Activated T-helper 2 cell treated with anti-CD3 and anti-CD28 coated beads, Interferon-gamma antibody, Interleukin-2, Interleukin-4, amounts not matched to agents 10 μg/mL and 5 μg/mL and 100 μg/mL, durations not matched to agents 14 hours and 24 hours and 36 hours (primary cell): ENCODE measurements at regions of chr20 and their contacts with region 1.

Region 1: GRCh38 chr20:20712474-20713243 is at the start of gene RALGAPA2:
- DNase-seq: peak; percentile 92
- H3K4me3 Mint-ChIP-seq: peak within 1 kb of the TSS; percentile 87
- H3K27ac Mint-ChIP-seq: peak within 1 kb of the TSS; percentile 86
- H3K4me1 Mint-ChIP-seq: peaks cover 27% of the 10 kb centered on the region
- H3K27me3 Mint-ChIP-seq: no peaks in the 10 kb centered on the region
- total RNA-seq, gene RALGAPA2: 22.1 and 25.0 TPM in 2 replicates

Region 2: GRCh38 chr20:20677186-20677585 is 35.5 kb before region 1 on chr20:
- intact Hi-C with region 1: loop called (anchors 5 kb)
- DNase-seq: no peak
- H3K4me3 Mint-ChIP-seq: no peak overlapping the region
- H3K27ac Mint-ChIP-seq: no peak overlapping the region
- H3K4me1 Mint-ChIP-seq: peaks cover 9% of the 10 kb centered on the region
- H3K27me3 Mint-ChIP-seq: no peaks in the 10 kb centered on the region

Region 3: DNA sequence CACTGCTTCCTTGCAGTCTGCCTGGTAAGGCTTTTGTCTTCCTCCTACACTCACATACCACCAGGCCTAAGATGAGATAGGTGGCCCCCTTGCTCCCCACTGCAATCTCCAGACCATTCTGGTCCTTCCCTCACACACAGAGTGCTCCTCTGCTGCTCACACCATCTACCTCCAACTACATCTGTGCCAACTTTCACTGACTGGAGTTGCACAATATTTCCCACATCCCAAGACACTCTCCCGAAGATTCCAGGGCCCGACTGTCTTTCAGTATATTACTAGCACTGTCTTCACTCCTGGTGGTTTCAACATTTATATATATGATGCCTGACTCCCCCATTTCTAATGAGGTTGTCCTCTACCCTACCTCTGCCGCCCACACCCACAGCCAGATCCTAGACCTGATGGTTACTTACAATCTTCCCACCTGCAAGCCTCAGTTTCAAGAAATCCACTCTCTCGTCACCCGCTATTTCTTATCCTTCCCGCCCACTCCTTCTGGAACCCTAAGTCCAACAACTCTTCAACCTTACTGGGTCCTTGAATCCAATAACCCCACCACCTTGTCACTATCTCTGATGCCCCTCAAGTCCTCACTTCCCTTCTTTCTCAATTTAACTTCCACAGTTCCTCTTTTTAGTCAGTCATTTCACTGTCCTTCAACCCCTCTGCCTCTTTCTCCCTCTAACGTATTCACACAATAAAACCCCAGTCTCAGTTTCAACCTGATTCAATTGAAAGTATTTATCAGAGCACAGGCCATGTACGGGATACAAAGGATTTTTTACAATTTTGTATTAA is 21.8 kb before region 1 on chr20:
- intact Hi-C with region 1: no loop called
- DNase-seq: no peak
- H3K4me3 Mint-ChIP-seq: no peak overlapping the region
- H3K27ac Mint-ChIP-seq: no peak overlapping the region
- H3K4me1 Mint-ChIP-seq: peaks cover 3% of the 10 kb centered on the region
- H3K27me3 Mint-ChIP-seq: no peaks in the 10 kb centered on the region

Region 4: DNA sequence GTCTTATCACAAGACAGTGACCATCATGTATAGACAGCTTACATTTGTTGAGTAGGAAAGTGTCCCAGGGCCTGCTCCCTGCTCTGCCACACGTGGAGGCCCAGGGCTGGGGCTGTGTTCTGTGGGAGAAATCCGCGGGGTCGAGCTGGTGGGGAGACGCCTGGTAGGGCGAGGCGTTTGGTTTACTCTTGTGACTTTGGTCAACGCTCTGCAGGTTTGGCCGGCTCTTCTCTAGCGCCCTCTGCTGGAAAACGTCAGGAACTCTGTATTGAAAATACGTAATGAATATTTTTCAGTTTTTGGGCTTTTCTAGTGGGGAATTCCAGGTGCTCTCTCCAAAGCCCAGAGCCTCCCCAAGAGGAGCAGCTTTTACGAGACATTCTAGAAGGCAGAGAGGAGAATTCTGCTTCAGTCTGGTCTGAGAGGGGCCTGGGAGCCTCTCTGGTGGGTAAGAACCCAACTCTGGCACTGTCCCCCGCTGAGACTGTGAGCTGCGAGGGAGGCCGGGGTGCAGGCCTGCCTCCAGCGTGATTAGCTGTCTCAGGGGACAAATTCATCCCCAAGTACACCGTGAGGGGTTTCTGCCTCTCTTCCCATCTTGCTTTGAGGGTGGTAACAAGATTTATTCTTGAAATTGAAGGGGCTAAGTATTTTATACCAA is 112.4 kb after region 1 on chr20:
- intact Hi-C with region 1: no loop called
- DNase-seq: peak; percentile 26
- H3K4me3 Mint-ChIP-seq: no peak overlapping the region
- H3K27ac Mint-ChIP-seq: no peak overlapping the region
- H3K4me1 Mint-ChIP-seq: no peaks in the 10 kb centered on the region
- H3K27me3 Mint-ChIP-seq: peaks cover 10% of the 10 kb centered on the region

Region 5: DNA sequence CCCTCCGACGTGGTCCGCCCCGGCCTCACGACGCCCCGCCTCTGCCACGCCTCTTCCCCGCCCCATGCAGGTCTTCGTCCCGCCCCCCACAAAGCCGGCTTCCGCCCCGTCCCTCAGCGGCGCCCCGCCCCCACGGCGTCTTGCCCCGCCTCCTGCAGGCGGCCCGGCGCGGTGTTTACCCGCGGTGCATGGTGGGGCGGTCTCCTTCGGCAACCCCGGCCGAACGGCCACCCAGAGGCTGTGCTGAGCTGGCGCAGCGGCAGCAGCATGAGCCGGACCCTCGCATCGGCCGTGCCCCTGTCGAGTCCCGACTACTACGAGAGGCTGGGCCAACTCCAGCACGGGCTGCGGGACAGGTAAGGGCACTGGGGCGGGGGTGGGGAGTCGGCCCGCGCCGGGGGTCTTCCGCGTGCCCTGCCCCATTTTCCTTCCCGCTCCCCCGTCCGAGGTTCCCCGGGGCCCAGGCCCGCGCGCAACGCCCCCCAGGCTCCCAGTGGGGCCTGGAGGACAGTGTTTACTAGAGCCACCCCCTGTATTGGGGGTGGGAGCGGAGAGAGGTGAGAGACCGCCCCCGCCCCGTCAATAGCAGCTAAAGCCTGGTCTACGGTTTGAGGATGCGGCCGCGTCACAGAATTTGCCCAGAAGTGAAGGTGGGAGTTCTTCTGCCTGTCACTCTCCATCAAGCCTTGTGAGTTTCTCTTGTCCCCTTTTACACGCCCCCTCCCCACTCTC is 413.4 kb after region 1 on chr20 and contains the start of gene KIZ:
- intact Hi-C with region 1: loop called (anchors 2 kb)
- DNase-seq: peak; percentile 95
- H3K4me3 Mint-ChIP-seq: peak within 1 kb of the TSS; percentile 86
- H3K27ac Mint-ChIP-seq: peak within 1 kb of the TSS; percentile 70
- H3K4me1 Mint-ChIP-seq: peaks cover 21% of the 10 kb centered on the region
- H3K27me3 Mint-ChIP-seq: peaks cover 1% of the 10 kb centered on the region
- total RNA-seq, gene KIZ: 8.9 and 10.5 TPM in 2 replicates